Activated CD8-positive, alpha-beta T cell treated with anti-CD3 and anti-CD28 coated beads for 36 hours (primary cell): ENCODE measurements at regions of chr9 and their contacts with region 1.

Region 1: GRCh38 chr9:109110326-109111021 is 9.3 kb downstream of the TMEM245 start:
- DNase-seq: no peak
- ATAC-seq: peak; percentile 66
- H3K4me3 Mint-ChIP-seq: peak overlapping the region; percentile 63
- H3K27ac Mint-ChIP-seq: peak overlapping the region; percentile 88
- H3K4me1 Mint-ChIP-seq: peaks cover 81% of the 10 kb centered on the region
- H3K27me3 Mint-ChIP-seq: no peaks in the 10 kb centered on the region
- CTCF ChIP-seq: no peak

Region 2: GRCh38 chr9:109012876-109013678 is 97.4 kb before region 1 on chr9 and contains the start of gene CTNNAL1:
- CTCF ChIA-PET with region 1: no interaction called
- POLR2A ChIA-PET with region 1: no interaction called
- intact Hi-C with region 1: loop called (anchors 5 kb)
- DNase-seq: peak; percentile 90
- ATAC-seq: peak; percentile 91
- H3K4me3 Mint-ChIP-seq: peak within 1 kb of the TSS; percentile 91
- H3K27ac Mint-ChIP-seq: peak within 1 kb of the TSS; percentile 85
- H3K4me1 Mint-ChIP-seq: peaks cover 25% of the 10 kb centered on the region
- H3K27me3 Mint-ChIP-seq: no peaks in the 10 kb centered on the region
- CTCF ChIP-seq: no peak
- total RNA-seq, gene CTNNAL1: 24.1 to 26.0 TPM

Region 3: DNA sequence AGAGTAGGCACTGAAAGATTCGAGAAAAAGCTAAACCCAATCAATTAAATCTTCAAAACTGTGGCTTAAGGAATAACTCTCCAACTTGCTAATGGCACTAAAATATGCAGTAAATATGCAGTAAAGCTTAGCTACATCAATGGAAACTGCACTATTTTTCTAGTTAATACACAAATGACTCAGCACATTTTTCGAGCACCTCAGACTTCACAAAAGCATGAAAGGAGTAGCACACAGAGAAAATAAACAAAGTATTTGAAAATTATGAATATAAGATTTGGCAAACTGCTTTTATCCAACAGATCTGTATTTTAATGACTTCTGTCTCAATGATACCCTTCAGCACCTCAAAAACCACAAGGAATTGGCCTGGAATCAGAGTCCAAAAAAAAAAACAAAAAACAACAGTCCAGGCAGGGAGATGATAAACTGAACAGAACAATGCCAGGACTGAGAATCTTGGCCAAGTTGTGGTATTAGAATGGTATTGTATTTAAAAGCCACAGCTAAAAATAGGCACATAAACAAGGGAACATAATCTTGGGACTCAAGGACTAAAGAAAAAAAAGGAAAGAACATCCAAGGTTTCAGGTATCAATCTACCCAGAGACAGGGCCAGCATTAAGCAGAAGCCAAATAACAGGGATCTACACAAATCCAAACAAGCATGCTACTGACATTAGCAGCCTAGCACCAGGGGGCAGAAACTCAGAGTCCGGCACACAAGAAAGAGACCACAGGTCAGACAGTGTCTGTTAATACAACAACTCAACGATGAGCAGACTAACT is 12.1 kb before region 1 on chr9:
- CTCF ChIA-PET with region 1: interaction called, 15 read pairs
- POLR2A ChIA-PET with region 1: interaction called, 9 read pairs
- intact Hi-C with region 1: no loop called
- DNase-seq: no peak
- ATAC-seq: no peak
- H3K4me3 Mint-ChIP-seq: no peak overlapping the region
- H3K27ac Mint-ChIP-seq: peak overlapping the region; percentile 52
- H3K4me1 Mint-ChIP-seq: peaks cover 83% of the 10 kb centered on the region
- H3K27me3 Mint-ChIP-seq: no peaks in the 10 kb centered on the region
- CTCF ChIP-seq: no peak